Activated CD8-positive, alpha-beta T cell treated with anti-CD3 and anti-CD28 coated beads for 36 hours (primary cell): ENCODE measurements at regions of chr4 and their contacts with region 1.

Region 1: GRCh38 chr4:106502106-106502699 is 133.6 kb upstream of the GIMD1 start:
- DNase-seq: peak; percentile 67
- ATAC-seq: peak; percentile 61
- H3K4me3 Mint-ChIP-seq: no peak overlapping the region
- H3K27ac Mint-ChIP-seq: no peak overlapping the region
- H3K4me1 Mint-ChIP-seq: peaks cover 4% of the 10 kb centered on the region
- H3K27me3 Mint-ChIP-seq: peaks cover 18% of the 10 kb centered on the region
- CTCF ChIP-seq: peak; percentile 67

Region 2: GRCh38 chr4:106238820-106239420 is 263.3 kb before region 1 on chr4:
- CTCF ChIA-PET with region 1: no interaction called
- POLR2A ChIA-PET with region 1: no interaction called
- intact Hi-C with region 1: loop called (anchors 10 kb)
- DNase-seq: peak; percentile 7
- ATAC-seq: peak; percentile 71
- H3K4me3 Mint-ChIP-seq: no peak overlapping the region
- H3K27ac Mint-ChIP-seq: no peak overlapping the region
- H3K4me1 Mint-ChIP-seq: no peaks in the 10 kb centered on the region
- H3K27me3 Mint-ChIP-seq: no peaks in the 10 kb centered on the region
- CTCF ChIP-seq: peak; percentile 60

Region 3: GRCh38 chr4:106266201-106266600 is 236.0 kb before region 1 on chr4:
- CTCF ChIA-PET with region 1: interaction called, 12 read pairs
- POLR2A ChIA-PET with region 1: no interaction called
- intact Hi-C with region 1: no loop called
- DNase-seq: no peak
- ATAC-seq: no peak
- H3K4me3 Mint-ChIP-seq: no peak overlapping the region
- H3K27ac Mint-ChIP-seq: no peak overlapping the region
- H3K4me1 Mint-ChIP-seq: peaks cover 8% of the 10 kb centered on the region
- H3K27me3 Mint-ChIP-seq: no peaks in the 10 kb centered on the region
- CTCF ChIP-seq: peak; percentile 33

Region 4: DNA sequence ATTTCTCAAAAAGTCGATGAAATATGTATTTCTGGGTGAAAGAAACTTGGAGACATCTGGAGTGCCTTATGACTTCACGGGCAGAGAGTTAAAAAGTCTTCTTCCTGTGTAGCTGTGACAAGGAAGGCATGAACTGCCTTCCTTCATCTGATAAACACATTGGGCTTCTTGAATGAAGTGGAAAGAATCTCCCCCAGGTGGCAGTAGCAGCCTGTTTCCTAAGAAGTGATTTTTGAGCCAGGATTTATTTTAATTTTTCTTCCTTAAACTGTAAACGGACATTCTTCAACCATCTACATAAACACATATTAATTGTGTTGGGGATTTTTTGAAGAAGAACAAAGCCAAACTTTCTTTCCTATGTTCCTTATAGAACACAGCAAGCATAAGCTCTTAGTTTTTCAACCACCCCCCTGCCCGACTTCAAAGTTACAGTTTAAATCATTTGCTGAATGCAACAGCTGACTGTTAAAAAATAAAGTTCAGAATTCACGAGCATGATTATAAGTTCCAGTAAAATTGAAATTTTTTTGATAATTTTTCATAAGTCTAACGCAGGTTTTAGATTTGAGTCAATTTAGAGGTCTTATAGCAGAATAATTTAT is 132.6 kb before region 1 on chr4:
- CTCF ChIA-PET with region 1: interaction called, 8 read pairs
- POLR2A ChIA-PET with region 1: no interaction called
- intact Hi-C with region 1: loop called (anchors 5 kb)
- DNase-seq: peak; percentile 56
- ATAC-seq: peak; percentile 60
- H3K4me3 Mint-ChIP-seq: no peak overlapping the region
- H3K27ac Mint-ChIP-seq: no peak overlapping the region
- H3K4me1 Mint-ChIP-seq: no peaks in the 10 kb centered on the region
- H3K27me3 Mint-ChIP-seq: peaks cover 24% of the 10 kb centered on the region
- CTCF ChIP-seq: peak; percentile 49

Region 5: DNA sequence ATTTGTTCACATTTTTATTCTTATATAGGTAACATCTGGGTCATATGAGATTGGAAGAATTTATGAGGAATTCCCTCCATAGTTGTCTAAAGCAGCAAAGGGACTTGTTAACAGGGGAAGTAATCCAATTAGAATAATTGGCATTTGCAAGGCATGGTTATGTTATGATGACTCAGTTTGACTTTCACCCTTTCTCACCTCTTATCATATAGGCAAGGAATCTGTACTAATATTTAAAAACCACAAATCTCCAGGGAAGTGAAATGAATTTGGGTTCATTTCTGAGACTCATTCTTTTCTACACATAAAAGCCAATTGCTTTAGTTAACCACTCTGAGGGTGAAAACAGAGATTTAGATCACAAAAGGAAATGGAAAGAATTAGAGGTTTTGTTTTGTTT is 815.4 kb after region 1 on chr4:
- CTCF ChIA-PET with region 1: no interaction called
- POLR2A ChIA-PET with region 1: no interaction called
- intact Hi-C with region 1: no loop called
- DNase-seq: no peak
- ATAC-seq: no peak
- H3K4me3 Mint-ChIP-seq: no peak overlapping the region
- H3K27ac Mint-ChIP-seq: no peak overlapping the region
- H3K4me1 Mint-ChIP-seq: no peaks in the 10 kb centered on the region
- H3K27me3 Mint-ChIP-seq: peaks cover 1% of the 10 kb centered on the region
- CTCF ChIP-seq: no peak